Activated CD4-positive, alpha-beta T cell treated with anti-CD3 and anti-CD28 coated beads for 36 hours (primary cell): ENCODE measurements at regions of chr11 and their contacts with region 1.

Region 1: GRCh38 chr11:16902781-16903378 is 111.3 kb downstream of the PLEKHA7 start:
- DNase-seq: peak; percentile 39
- ATAC-seq: peak; percentile 85
- H3K4me3 Mint-ChIP-seq: peak overlapping the region; percentile 46
- H3K27ac Mint-ChIP-seq: peak overlapping the region; percentile 98
- H3K4me1 Mint-ChIP-seq: peaks cover 55% of the 10 kb centered on the region
- H3K27me3 Mint-ChIP-seq: no peaks in the 10 kb centered on the region

Region 2: DNA sequence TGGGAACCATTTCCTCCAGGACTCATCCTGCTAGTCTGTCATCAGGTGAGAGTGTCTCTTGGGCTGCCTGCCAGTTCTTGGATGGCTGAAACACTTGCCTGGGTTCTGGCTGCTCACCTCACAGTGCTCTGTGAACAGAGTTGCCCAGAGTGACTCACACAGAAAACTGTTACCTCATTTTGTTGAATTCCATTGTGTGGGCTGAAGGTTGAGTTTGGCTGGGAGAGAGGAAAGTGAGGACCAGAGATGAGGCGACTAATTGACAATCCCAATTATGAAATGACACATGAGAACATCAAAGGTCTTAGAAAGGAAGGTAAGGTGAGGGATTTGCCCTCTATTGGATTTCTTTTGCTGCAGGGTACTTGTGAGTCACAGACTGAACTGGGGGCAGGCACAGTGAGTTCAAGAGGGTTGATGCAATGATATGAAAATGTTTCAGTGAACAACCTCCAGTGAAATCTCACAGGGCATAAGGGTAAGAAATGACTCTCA is 1849.6 kb before region 1 on chr11:
- CTCF ChIA-PET with region 1: no interaction called
- POLR2A ChIA-PET with region 1: no interaction called
- intact Hi-C with region 1: loop called in 1 of 2 experiments (anchors 2 kb)
- DNase-seq: peak; percentile 68
- ATAC-seq: peak; percentile 87
- H3K4me3 Mint-ChIP-seq: no peak overlapping the region
- H3K27ac Mint-ChIP-seq: peak overlapping the region; percentile 84
- H3K4me1 Mint-ChIP-seq: peaks cover 28% of the 10 kb centered on the region
- H3K27me3 Mint-ChIP-seq: peaks cover 5% of the 10 kb centered on the region

Region 3: GRCh38 chr11:16749666-16750065 is 153.2 kb before region 1 on chr11:
- CTCF ChIA-PET with region 1: no interaction called
- POLR2A ChIA-PET with region 1: no interaction called
- intact Hi-C with region 1: loop called in 1 of 2 experiments (anchors 5 kb)
- DNase-seq: peak; percentile 27
- ATAC-seq: peak; percentile 83
- H3K4me3 Mint-ChIP-seq: no peak overlapping the region
- H3K27ac Mint-ChIP-seq: peak overlapping the region; percentile 76
- H3K4me1 Mint-ChIP-seq: peaks cover 50% of the 10 kb centered on the region
- H3K27me3 Mint-ChIP-seq: no peaks in the 10 kb centered on the region

Region 4: GRCh38 chr11:16862746-16863145 is 40.1 kb before region 1 on chr11:
- CTCF ChIA-PET with region 1: interaction called, 5 read pairs
- POLR2A ChIA-PET with region 1: interaction called, 4 read pairs
- intact Hi-C with region 1: loop called (anchors 1 kb)
- DNase-seq: peak; percentile 25
- ATAC-seq: no peak
- H3K4me3 Mint-ChIP-seq: no peak overlapping the region
- H3K27ac Mint-ChIP-seq: no peak overlapping the region
- H3K4me1 Mint-ChIP-seq: peaks cover 34% of the 10 kb centered on the region
- H3K27me3 Mint-ChIP-seq: no peaks in the 10 kb centered on the region

Region 5: GRCh38 chr11:17298302-17298701 is 395.4 kb after region 1 on chr11:
- CTCF ChIA-PET with region 1: no interaction called
- POLR2A ChIA-PET with region 1: no interaction called
- intact Hi-C with region 1: loop called (anchors 1 to 2 kb)
- DNase-seq: peak; percentile 83
- ATAC-seq: peak; percentile 82
- H3K4me3 Mint-ChIP-seq: no peak overlapping the region
- H3K27ac Mint-ChIP-seq: no peak overlapping the region
- H3K4me1 Mint-ChIP-seq: peaks cover 40% of the 10 kb centered on the region
- H3K27me3 Mint-ChIP-seq: no peaks in the 10 kb centered on the region